Mucosa of descending colon (tissue), 3 donors: ENCODE measurements at regions of chr2 and their contacts with region 1.

Region 1: DNA sequence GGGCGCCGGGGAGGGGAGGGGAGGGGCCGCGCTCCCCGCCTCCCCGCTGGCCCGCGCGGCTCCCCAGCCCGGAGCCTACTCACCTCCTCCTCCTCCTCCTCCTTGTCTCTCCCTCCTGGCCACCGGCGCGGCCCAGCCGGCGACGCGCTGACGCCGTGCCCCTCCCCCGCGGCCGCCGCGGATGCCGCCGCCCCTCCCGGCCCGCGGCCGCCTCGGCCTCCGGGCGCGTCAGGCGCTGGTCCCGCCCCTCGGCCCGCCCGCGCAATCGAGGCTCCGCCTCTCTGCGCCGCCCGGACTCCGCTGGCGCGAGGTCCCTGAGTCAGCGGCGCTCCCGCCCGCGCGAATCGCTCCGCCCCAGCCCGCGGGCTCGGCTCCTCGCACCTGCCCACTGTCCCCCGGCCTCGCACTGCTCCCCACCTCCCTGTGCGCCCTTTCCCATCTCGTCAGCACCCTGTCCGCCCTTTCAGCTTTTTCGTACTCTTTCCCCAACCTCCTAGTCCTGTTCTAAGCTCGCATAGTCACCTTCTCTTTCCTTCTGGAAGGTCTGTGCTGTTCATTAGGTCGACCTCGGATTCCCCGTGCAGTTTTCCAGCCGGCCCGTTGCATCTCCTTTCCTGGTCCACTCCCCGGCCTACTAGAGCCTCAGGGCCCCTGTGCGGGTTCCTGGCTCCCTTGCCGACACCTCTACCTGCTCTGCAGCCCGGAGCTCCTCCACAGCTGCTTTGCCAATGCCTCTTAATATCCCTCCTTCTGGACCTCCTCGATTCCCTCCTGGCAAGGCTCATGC is 187.4 kb downstream of the ZEB2 start:
- DNase-seq: peak; percentile 88 to 94 (median 90)
- ATAC-seq: peak; percentile 96
- H3K4me3 ChIP-seq: peak overlapping the region; percentile 39
- H3K4me1 ChIP-seq: peaks cover 4% of the 10 kb centered on the region
- CTCF ChIP-seq: no peak

Region 2: GRCh38 chr2:143686585-143687164 is 645.9 kb before region 1 on chr2:
- intact Hi-C with region 1: loop called in 1 of 2 experiments (anchors 10 kb)
- DNase-seq: no peak
- ATAC-seq: no peak
- H3K4me3 ChIP-seq: no peak overlapping the region
- H3K4me1 ChIP-seq: no peaks in the 10 kb centered on the region
- CTCF ChIP-seq: no peak

Region 3: DNA sequence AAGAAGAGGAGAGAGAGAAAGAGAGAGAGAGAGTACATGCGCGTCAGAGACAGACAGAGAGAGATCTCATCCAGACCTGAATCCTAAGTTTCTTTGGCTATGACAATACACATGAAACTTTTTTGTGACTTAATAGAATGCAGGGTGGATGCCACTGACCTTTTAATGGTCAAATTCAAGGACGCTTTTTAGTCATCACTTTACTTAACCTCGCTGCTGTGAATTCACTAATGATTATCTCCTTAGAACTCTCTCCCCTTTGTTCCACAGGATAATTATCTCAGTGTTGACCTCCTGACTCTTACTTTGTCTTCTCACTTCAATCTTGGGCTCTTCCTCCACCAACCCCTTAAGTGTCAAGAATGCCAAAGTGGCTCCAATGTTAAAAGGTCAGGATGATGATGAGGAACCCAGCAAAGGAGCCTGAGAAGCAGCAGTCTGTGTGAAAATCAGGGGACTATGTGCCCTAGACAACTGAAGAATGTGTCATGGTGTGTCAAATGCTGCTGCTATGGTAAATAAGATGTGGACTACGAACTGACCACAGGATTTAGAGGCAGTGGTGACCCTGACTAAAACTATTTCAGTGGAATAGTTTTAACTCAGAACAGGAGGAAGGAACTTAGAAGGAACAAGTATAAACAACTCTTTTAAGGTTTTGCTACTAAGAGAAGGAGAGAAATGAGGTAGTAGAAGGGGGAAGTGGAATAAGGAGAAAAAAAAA is 194.7 kb before region 1 on chr2:
- intact Hi-C with region 1: no loop called
- DNase-seq: no peak
- ATAC-seq: no peak
- H3K4me3 ChIP-seq: no peak overlapping the region
- H3K4me1 ChIP-seq: no peaks in the 10 kb centered on the region
- CTCF ChIP-seq: no peak